Naive thymus-derived CD8-positive, alpha-beta T cell (primary cell): ENCODE measurements at regions of chr1 and their contacts with region 1.

Region 1: DNA sequence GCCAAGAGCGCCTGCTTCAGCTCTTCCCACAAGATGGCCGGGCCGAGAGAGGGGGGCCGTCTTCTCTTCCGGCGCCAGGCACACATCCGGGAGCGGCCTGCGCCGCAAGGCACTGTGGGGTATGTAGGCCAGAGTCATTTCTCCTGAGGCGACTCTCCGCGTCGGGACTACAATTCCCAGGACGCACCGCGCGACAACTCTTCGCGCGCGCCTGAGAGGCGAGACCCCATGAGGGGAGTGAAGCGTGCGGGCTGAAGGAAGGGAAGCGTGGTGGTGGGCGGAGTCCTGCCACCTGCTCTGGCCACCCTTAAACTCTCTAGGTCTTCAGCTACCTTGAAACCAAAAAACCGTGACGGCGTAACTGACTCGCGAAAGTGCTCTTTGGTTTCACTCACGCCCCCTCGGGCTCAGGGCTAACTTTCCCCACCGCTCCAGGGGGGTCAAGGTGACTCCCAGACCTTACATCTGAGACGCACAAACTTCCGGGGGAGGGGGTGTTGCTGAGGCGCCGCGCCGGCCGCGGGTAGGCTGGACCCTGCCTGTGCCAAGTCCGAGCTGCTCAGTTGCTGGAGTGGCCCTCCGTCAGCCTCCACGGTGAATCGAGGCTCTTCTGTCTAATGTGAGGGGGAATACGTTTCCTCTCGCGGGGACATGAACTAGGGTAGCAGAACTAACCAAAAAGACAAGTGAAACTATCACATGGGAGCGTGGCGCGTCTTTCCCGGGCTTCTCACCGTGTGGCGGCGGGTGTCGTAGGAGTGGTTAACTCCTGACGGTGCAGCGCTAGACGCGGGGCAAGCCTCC is at the start of gene SERBP1:
- DNase-seq: peak; percentile 89 to 98 (median 94)
- ATAC-seq: peak; percentile 84 to 88
- H3K4me3 Mint-ChIP-seq: peak within 1 kb of the TSS; percentile 83 to 99 (median 96)
- H3K27ac Mint-ChIP-seq: peak within 1 kb of the TSS; percentile 93 to 100 (median 98)
- H3K4me1 Mint-ChIP-seq: peaks cover 26 to 68% (median 47%) of the 10 kb centered on the region in 4 donors
- H3K27me3 Mint-ChIP-seq: no peaks in the 10 kb centered on the region
- polyA plus RNA-seq, gene SERBP1: 130 to 156 (median 153) TPM

Region 2: GRCh38 chr1:66924756-66925557 is 505.6 kb before region 1 on chr1 and contains the starts of genes DNAI4 and MIER1:
- POLR2A ChIA-PET with region 1: interaction called, 14 read pairs
- DNase-seq: peak; percentile 93 to 98 (median 97)
- ATAC-seq: peak; percentile 92 to 93
- H3K4me3 Mint-ChIP-seq: peak within 1 kb of the TSS; percentile 93 to 98 (median 96)
- H3K27ac Mint-ChIP-seq: peak within 1 kb of the TSS; percentile 94 to 99 (median 97)
- H3K4me1 Mint-ChIP-seq: peaks cover 10 to 50% (median 46%) of the 10 kb centered on the region in 4 donors
- H3K27me3 Mint-ChIP-seq: no peaks in the 10 kb centered on the region
- polyA plus RNA-seq, gene DNAI4: 0.69 to 0.98 (median 0.86) TPM
- polyA plus RNA-seq, gene MIER1: 30.1 to 37.3 (median 36.4) TPM

Region 3: DNA sequence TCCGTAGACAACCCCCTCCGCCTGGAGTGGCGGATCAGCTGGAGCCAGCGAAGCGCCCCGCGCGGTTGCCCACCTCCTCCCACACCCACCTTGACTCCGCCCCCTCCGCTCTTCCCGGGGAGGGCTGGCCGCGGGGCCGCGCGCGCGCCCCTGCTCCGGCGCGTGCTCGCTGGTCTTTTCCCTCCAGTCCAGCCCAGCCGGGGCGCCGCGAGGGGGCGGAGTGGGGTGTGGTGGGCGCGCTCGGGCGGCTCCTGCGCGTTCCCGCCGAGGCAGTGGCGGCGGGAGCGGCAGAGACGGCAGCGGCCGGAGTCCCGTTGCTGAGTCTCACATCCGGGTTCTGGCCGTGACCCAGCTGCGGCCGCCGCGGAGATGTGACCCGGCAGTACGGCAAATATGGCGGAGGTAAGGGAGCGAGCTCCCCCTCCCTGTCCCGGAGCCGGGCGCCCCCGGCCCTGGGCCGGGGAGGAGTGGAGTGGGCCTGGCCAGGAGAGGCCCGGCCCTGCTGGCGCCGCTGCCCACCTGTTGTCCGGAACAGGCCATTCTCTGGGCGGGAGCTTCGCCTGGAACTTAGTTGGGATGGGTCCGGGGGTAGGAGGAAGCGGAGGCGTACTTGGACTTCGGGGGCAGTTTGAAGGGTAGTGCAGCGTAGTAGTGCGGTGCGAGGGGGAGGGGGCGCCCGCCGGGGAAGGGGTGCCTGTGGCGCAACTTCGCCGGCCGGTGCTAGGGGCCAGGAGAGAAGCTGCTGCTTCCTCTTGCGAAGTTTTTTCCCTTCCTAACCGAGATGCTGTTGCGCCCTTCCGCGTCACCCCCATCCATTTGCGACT is 500.3 kb before region 1 on chr1:
- POLR2A ChIA-PET with region 1: interaction called, 14 read pairs
- DNase-seq: peak; percentile 89 to 97 (median 94)
- ATAC-seq: peak; percentile 64 to 70
- H3K4me3 Mint-ChIP-seq: peak overlapping the region; percentile 84 to 97 (median 92)
- H3K27ac Mint-ChIP-seq: peak overlapping the region; percentile 84 to 98 (median 92)
- H3K4me1 Mint-ChIP-seq: peaks cover 14 to 72% (median 60%) of the 10 kb centered on the region in 4 donors
- H3K27me3 Mint-ChIP-seq: no peaks in the 10 kb centered on the region

Region 4: DNA sequence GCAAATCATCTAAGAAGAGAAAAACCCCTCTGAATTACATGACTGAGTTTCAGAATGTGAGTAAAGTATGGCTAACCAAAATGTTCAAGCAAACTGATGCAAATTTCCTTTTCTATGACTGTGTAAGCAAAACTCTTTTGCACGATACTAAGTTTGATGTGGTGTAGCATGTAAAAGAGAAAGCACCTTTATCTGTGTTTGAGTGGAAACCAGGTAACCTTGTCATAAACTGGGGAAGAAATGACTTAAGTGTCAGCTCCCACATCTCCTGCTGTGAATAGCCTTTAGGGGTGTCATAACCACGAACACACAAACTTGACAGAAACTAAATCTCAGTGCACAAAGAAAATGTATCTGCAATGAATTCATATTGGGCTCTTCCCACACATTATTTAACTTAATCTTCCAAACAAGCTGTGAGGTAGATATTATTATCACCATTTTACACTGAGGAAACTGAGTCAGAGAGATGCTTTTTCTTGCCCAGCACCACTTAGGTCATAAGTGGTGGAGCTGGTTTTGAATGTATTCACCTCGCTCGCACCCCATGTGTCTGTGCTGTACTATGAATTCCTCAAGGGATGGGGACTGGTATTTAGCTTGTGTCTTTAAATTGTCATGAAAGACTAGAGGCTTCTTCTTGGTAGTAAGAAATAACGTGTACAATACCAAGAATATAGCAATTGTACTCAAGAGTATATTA is 155.8 kb before region 1 on chr1:
- POLR2A ChIA-PET with region 1: no interaction called
- DNase-seq: peak in 3 of 10 donors; percentile 30 to 38 (median 37)
- ATAC-seq: peak; percentile 35 to 89
- H3K4me3 Mint-ChIP-seq: no peak overlapping the region
- H3K27ac Mint-ChIP-seq: peak overlapping the region in 4 of 10 donors; percentile 15 to 58 (median 18)
- H3K4me1 Mint-ChIP-seq: peaks cover 3 to 13% (median 8%) of the 10 kb centered on the region in 4 donors
- H3K27me3 Mint-ChIP-seq: no peaks in the 10 kb centered on the region

Region 5: GRCh38 chr1:67404212-67404620 is 26.3 kb before region 1 on chr1:
- POLR2A ChIA-PET with region 1: no interaction called
- DNase-seq: no peak
- ATAC-seq: no peak
- H3K4me3 Mint-ChIP-seq: no peak overlapping the region
- H3K27ac Mint-ChIP-seq: peak overlapping the region in 4 of 10 donors; percentile 28 to 57 (median 43)
- H3K4me1 Mint-ChIP-seq: peaks cover 0 to 4% (median 2%) of the 10 kb centered on the region in 4 donors
- H3K27me3 Mint-ChIP-seq: no peaks in the 10 kb centered on the region

Region 6: GRCh38 chr1:67472056-67472455 is 41.5 kb after region 1 on chr1:
- POLR2A ChIA-PET with region 1: no interaction called
- DNase-seq: no peak
- ATAC-seq: no peak
- H3K4me3 Mint-ChIP-seq: no peak overlapping the region
- H3K27ac Mint-ChIP-seq: no peak overlapping the region
- H3K4me1 Mint-ChIP-seq: peaks cover 0 to under 1% (median 0%) of the 10 kb centered on the region in 4 donors
- H3K27me3 Mint-ChIP-seq: peaks cover 0 to 8% (median 0%) of the 10 kb centered on the region in 5 donors

Region 7: GRCh38 chr1:67489643-67490042 is 59.1 kb after region 1 on chr1:
- POLR2A ChIA-PET with region 1: no interaction called
- DNase-seq: peak in 3 of 10 donors; percentile 5 to 23 (median 8)
- ATAC-seq: peak; percentile 43 to 58
- H3K4me3 Mint-ChIP-seq: no peak overlapping the region
- H3K27ac Mint-ChIP-seq: no peak overlapping the region
- H3K4me1 Mint-ChIP-seq: no peaks in the 10 kb centered on the region
- H3K27me3 Mint-ChIP-seq: peaks cover 0 to 3% (median 0%) of the 10 kb centered on the region in 5 donors